ENCODE measurements at regions of chrX and their contacts with region 1.

Region 1: GRCh38 chrX:15686818-15687685 is 22.4 kb upstream of the CLTRN start:
- DNase-seq: peak; percentile 35 to 43
- H3K4me3 ChIP-seq: no peak overlapping the region
- H3K27ac ChIP-seq: no peak overlapping the region
- H3K4me1 ChIP-seq: no peaks in the 10 kb centered on the region
- H3K27me3 ChIP-seq: no peaks in the 10 kb centered on the region
- CTCF ChIP-seq: peak; percentile 74

Region 2: DNA sequence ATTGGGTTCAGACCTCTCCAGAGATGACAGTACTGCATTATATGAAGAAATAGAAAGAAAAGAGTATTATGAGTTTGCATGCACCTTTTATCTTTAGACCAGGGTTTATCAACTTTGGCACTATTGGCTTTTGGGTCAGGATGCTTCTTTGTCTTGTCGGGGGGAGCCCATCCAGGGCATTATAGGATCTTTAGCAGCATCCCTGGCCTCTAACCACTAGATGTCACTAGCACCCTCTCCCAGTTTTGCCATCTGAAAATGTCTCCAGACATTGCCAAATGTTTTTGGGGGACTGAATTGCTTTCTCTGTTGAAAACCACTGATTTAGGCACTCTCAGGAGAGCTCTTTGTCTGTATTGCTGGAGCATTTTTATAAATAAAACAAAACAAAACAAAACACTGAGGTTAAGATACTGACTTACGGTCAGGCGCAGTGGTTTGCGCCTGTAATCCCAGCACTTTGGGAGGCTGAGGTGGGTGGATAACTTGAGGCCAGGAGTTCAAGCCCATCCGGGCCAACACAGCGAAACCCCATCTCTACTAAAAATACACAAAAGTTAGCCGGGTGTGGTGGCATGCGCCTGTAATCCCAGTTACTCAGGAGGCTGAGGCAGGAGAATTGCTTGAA is 74.6 kb after region 1 on chrX:
- CTCF ChIA-PET with region 1: no interaction called
- POLR2A ChIA-PET with region 1: no interaction called
- intact Hi-C with region 1: no loop called
- DNase-seq: peak in 1 of 2 experiments; percentile 7
- H3K4me3 ChIP-seq: no peak overlapping the region
- H3K27ac ChIP-seq: no peak overlapping the region
- H3K4me1 ChIP-seq: no peaks in the 10 kb centered on the region
- H3K27me3 ChIP-seq: no peaks in the 10 kb centered on the region
- CTCF ChIP-seq: peak; percentile 69

Region 3: GRCh38 chrX:16212436-16212835 is 525.4 kb after region 1 on chrX:
- CTCF ChIA-PET with region 1: no interaction called
- POLR2A ChIA-PET with region 1: no interaction called
- intact Hi-C with region 1: loop called (anchors 10 kb)
- DNase-seq: no peak
- H3K4me3 ChIP-seq: no peak overlapping the region
- H3K27ac ChIP-seq: no peak overlapping the region
- H3K4me1 ChIP-seq: no peaks in the 10 kb centered on the region
- H3K27me3 ChIP-seq: no peaks in the 10 kb centered on the region
- CTCF ChIP-seq: no peak

Region 4: DNA sequence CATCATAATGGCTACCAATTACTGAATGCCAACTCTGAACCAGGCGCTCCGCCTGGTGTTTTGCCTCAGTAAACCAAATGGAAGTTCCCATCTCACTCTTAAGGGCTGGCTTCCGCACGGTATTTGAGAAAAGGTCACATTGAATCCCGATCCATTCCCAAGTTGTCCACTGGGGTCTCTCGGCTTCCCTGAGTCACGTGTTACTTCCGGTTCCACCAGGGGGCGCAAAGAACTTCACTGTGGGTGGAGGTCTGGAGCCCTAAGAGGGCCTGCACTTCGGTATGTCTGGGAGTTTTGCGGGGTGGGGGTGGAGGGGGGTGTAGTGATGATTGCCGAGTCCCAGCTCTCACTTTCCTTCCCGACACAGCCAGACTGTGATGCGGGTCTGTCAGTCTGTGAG is 1674.6 kb after region 1 on chrX:
- CTCF ChIA-PET with region 1: no interaction called
- POLR2A ChIA-PET with region 1: no interaction called
- intact Hi-C with region 1: no loop called
- DNase-seq: no peak
- H3K4me3 ChIP-seq: no peak overlapping the region
- H3K27ac ChIP-seq: no peak overlapping the region
- H3K4me1 ChIP-seq: no peaks in the 10 kb centered on the region
- H3K27me3 ChIP-seq: no peaks in the 10 kb centered on the region
- CTCF ChIP-seq: peak; percentile 37; the same call in 1 of the 2 replicates

Measured in PC-9 (cell line).